ENCODE measurements at regions of chr1 and their contacts with region 1.

Region 1: DNA sequence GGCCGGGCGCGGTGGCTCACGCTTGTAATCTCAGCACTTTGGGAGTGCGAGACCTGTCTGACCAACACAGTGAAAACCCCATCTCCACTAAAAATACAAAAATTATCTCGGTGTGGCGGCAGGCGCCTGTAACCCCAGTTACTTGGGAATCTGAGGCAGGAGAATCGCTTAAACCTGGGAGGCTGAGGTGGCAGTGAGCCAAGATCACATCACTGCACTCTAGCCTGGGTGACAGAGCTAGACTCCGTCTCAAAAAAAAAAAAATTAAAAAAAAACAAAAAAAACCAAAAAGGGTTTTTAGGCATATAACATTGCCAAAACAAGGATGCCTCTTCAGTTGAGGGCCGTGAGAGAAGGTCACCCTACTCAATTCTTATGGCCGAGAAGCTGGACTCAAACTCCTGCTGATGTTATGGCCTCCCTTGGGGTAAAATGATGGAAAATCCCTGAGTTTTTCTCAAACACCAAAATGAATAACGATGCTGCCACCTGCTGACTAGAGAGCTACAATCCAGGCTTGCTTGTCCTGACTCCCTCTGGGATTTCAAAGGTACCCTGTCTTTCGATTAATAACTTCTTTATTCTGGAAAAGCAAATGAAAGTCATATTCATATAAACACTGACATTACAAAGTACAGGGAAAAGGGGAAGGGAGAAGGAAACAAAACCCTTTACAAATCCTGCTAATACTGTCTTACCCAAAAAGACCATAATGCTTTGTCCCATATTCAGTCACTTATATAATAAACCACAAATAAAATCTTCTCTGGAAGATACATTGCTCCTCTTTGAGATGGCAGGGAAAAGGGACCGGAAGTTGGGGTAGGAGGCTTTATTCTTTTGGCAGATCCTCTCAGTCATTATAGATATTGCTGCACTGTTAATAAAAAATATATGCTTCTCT is 10.7 kb downstream of the RAB42 start:
- DNase-seq: peak; percentile 55 to 67
- H3K4me3 ChIP-seq: no peak overlapping the region
- H3K4me3 Mint-ChIP-seq: no peak overlapping the region
- H3K27ac Mint-ChIP-seq: no peak overlapping the region
- H3K4me1 ChIP-seq: peaks cover 20% of the 10 kb centered on the region
- H3K4me1 Mint-ChIP-seq: no peaks in the 10 kb centered on the region
- H3K27me3 ChIP-seq: no peaks in the 10 kb centered on the region
- H3K27me3 Mint-ChIP-seq: no peaks in the 10 kb centered on the region
- CTCF ChIP-seq: peak; percentile 40 to 52

Region 2: GRCh38 chr1:28369371-28370238 is 233.2 kb before region 1 on chr1 and contains the start of gene PHACTR4:
- CTCF ChIA-PET with region 1: no interaction called
- POLR2A ChIA-PET with region 1: no interaction called
- intact Hi-C with region 1: no loop called
- DNase-seq: peak; percentile 93 to 95
- H3K4me3 ChIP-seq: peak within 1 kb of the TSS; percentile 40
- H3K4me3 Mint-ChIP-seq: peak within 1 kb of the TSS; percentile 86
- H3K27ac Mint-ChIP-seq: peak within 1 kb of the TSS; percentile 92
- H3K4me1 ChIP-seq: peaks cover 14% of the 10 kb centered on the region
- H3K4me1 Mint-ChIP-seq: peaks cover 8% of the 10 kb centered on the region
- H3K27me3 ChIP-seq: no peaks in the 10 kb centered on the region
- H3K27me3 Mint-ChIP-seq: no peaks in the 10 kb centered on the region
- CTCF ChIP-seq: peak in 1 of 2 experiments; percentile 5
- total RNA-seq, gene PHACTR4: 31.1 and 35.5 TPM in 2 replicates

Region 3: GRCh38 chr1:28518000-28518744 is 84.6 kb before region 1 on chr1:
- CTCF ChIA-PET with region 1: interaction called, 4 read pairs
- POLR2A ChIA-PET with region 1: interaction called, 9 read pairs
- intact Hi-C with region 1: loop called (anchors 1 kb)
- DNase-seq: peak; percentile 90 to 91
- H3K4me3 ChIP-seq: peak overlapping the region; percentile 78
- H3K4me3 Mint-ChIP-seq: peak overlapping the region; percentile 87
- H3K27ac Mint-ChIP-seq: peak overlapping the region; percentile 91
- H3K4me1 ChIP-seq: no peaks in the 10 kb centered on the region
- H3K4me1 Mint-ChIP-seq: peaks cover 10% of the 10 kb centered on the region
- H3K27me3 ChIP-seq: no peaks in the 10 kb centered on the region
- H3K27me3 Mint-ChIP-seq: no peaks in the 10 kb centered on the region
- CTCF ChIP-seq: peak; percentile 78 to 87

Region 4: GRCh38 chr1:28716336-28716735 is 113.5 kb after region 1 on chr1:
- CTCF ChIA-PET with region 1: no interaction called
- POLR2A ChIA-PET with region 1: no interaction called
- intact Hi-C with region 1: no loop called
- DNase-seq: no peak
- H3K4me3 ChIP-seq: no peak overlapping the region
- H3K4me3 Mint-ChIP-seq: no peak overlapping the region
- H3K27ac Mint-ChIP-seq: no peak overlapping the region
- H3K4me1 ChIP-seq: no peaks in the 10 kb centered on the region
- H3K4me1 Mint-ChIP-seq: no peaks in the 10 kb centered on the region
- H3K27me3 ChIP-seq: no peaks in the 10 kb centered on the region
- H3K27me3 Mint-ChIP-seq: no peaks in the 10 kb centered on the region
- CTCF ChIP-seq: no peak